Common myeloid progenitor, CD34-positive (primary cell): ENCODE measurements at regions of chr9 and their contacts with region 1.

Region 1: DNA sequence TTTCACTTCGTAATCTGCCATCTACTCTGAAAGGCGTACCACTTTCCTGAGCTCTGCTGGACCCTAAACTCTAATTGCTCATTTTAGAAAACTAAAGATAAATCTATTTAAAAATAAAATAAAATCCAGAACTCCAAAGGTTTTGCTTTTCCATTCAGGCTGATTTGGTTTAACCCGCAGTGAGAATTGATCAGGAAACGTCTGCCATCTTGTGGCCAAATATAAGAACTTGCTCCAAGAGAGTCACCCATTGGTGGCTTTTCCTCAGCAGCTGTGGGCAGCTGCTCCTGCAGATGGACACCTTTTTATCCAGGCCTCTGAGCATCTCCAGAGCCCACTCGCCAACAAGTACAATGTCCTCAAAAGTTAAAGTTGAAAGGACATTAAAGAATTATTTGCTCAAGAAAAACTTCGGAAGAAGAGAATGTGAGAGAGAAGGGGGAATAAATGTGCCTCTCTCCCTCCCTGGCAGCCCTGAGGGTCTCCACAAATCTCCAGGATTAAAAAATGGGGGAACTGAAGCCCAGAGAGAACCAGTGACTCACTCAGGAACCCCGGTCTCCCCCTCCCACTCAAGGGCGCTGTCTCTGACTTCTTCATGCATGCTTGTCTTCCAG is 4.1 kb downstream of the SAXO1 start:
- DNase-seq: peak; percentile 43 to 60 (median 53)
- H3K4me3 ChIP-seq: no peak overlapping the region
- H3K27ac ChIP-seq: no peak overlapping the region
- H3K4me1 ChIP-seq: no peaks in the 10 kb centered on the region
- H3K27me3 ChIP-seq: peaks cover 0 to 14% (median 0%) of the 10 kb centered on the region in 5 experiments

Region 2: GRCh38 chr9:18566121-18566520 is 462.8 kb before region 1 on chr9:
- CTCF ChIA-PET with region 1: no interaction called
- POLR2A ChIA-PET with region 1: no interaction called
- DNase-seq: no peak
- H3K4me3 ChIP-seq: no peak overlapping the region
- H3K27ac ChIP-seq: no peak overlapping the region
- H3K4me1 ChIP-seq: no peaks in the 10 kb centered on the region
- H3K27me3 ChIP-seq: no peaks in the 10 kb centered on the region

Region 3: DNA sequence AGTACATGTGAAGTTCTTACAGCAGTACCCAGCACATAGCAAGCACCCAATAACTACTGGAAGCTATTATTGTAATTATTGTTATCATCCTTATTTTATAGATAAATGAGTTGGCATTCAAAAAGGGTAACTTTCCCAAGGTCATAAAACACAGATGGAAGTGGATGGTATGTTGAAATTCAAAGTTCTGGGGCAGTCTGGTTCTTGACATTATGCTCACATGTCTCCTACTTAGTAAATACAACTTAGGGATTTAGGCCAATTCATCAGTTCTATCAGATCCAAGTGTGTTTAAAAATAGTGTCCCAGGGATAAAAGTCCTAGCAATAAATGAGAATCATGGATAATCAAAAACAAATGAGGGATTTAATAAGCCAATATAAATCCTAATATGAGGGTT is 289.8 kb before region 1 on chr9:
- CTCF ChIA-PET with region 1: no interaction called
- POLR2A ChIA-PET with region 1: no interaction called
- DNase-seq: no peak
- H3K4me3 ChIP-seq: no peak overlapping the region
- H3K27ac ChIP-seq: no peak overlapping the region
- H3K4me1 ChIP-seq: no peaks in the 10 kb centered on the region
- H3K27me3 ChIP-seq: no peaks in the 10 kb centered on the region

Region 4: GRCh38 chr9:18979367-18979766 is 49.6 kb before region 1 on chr9:
- CTCF ChIA-PET with region 1: interaction called, 12 read pairs
- POLR2A ChIA-PET with region 1: no interaction called
- DNase-seq: no peak
- H3K4me3 ChIP-seq: no peak overlapping the region
- H3K27ac ChIP-seq: no peak overlapping the region
- H3K4me1 ChIP-seq: peaks cover 2 to 16% (median 11%) of the 10 kb centered on the region in 4 experiments
- H3K27me3 ChIP-seq: no peaks in the 10 kb centered on the region

Region 5: GRCh38 chr9:18994263-18995095 is 34.5 kb before region 1 on chr9:
- CTCF ChIA-PET with region 1: no interaction called
- POLR2A ChIA-PET with region 1: no interaction called
- DNase-seq: no peak
- H3K4me3 ChIP-seq: no peak overlapping the region
- H3K27ac ChIP-seq: no peak overlapping the region
- H3K4me1 ChIP-seq: no peaks in the 10 kb centered on the region
- H3K27me3 ChIP-seq: no peaks in the 10 kb centered on the region

Region 6: GRCh38 chr9:19018201-19018600 is 10.7 kb before region 1 on chr9:
- CTCF ChIA-PET with region 1: interaction called, 11 read pairs
- POLR2A ChIA-PET with region 1: no interaction called
- DNase-seq: peak; percentile 4 to 56 (median 49)
- H3K4me3 ChIP-seq: peak overlapping the region in 1 of 7 experiments; percentile 28
- H3K27ac ChIP-seq: no peak overlapping the region
- H3K4me1 ChIP-seq: peaks cover 0 to 17% (median 11%) of the 10 kb centered on the region in 4 experiments
- H3K27me3 ChIP-seq: no peaks in the 10 kb centered on the region

Region 7: GRCh38 chr9:19154135-19154612 is 125.2 kb after region 1 on chr9:
- CTCF ChIA-PET with region 1: no interaction called
- POLR2A ChIA-PET with region 1: no interaction called
- DNase-seq: peak; percentile 63 to 87 (median 82)
- H3K4me3 ChIP-seq: no peak overlapping the region
- H3K27ac ChIP-seq: peak overlapping the region in 1 of 2 experiments; percentile 0
- H3K4me1 ChIP-seq: peaks cover 0 to 26% (median 0%) of the 10 kb centered on the region in 4 experiments
- H3K27me3 ChIP-seq: no peaks in the 10 kb centered on the region